ENCODE measurements at regions of chr5 and their contacts with region 1.

Region 1: DNA sequence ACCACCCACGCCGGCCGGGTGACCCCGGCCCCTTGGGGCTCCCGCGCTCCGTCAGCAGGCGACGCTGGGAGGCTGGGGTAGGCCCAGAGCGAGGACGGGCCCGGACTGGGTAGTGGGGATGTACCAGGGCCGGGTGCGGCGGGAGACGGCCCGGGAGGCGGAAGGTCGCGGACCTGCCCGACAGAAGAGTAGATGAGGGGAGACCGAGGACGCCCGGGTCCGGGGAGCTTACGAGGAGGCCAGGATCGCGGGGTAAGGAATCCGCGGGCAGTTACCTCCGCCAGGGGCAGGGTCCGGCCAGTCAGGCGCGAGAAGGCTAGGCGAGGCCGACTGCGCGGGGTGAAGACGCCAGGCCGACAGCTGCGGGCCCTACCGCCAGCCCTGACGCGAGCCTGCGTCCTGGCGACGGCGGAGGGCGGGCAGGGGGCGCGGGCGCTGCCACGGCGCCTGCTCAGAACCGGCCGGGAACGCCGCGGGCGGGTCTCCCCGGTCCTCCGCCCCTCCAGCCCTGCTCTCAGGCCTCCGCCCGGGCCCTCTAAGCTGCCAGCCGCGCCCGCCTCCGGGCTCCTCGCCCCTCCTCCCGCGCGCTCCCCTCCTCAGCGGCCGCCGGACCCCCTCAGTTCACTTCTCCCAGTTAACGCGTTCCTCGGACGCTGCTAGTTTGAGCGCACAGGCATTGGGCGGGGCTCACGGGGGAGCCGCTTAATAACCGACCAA is at the start of gene CPLANE1:
- H3K4me3 ChIP-seq: peak within 1 kb of the TSS; percentile 58
- H3K27ac ChIP-seq: peak within 1 kb of the TSS; percentile 99
- H3K4me1 ChIP-seq: peaks cover 14% of the 10 kb centered on the region
- CTCF ChIP-seq: peak; percentile 91

Region 2: GRCh38 chr5:37214550-37214949 is 34.6 kb before region 1 on chr5:
- CTCF ChIA-PET with region 1: no interaction called
- POLR2A ChIA-PET with region 1: no interaction called
- H3K4me3 ChIP-seq: no peak overlapping the region
- H3K27ac ChIP-seq: no peak overlapping the region
- H3K4me1 ChIP-seq: peaks cover 3% of the 10 kb centered on the region; the same call in 1 of the 2 replicates
- CTCF ChIP-seq: no peak

Region 3: DNA sequence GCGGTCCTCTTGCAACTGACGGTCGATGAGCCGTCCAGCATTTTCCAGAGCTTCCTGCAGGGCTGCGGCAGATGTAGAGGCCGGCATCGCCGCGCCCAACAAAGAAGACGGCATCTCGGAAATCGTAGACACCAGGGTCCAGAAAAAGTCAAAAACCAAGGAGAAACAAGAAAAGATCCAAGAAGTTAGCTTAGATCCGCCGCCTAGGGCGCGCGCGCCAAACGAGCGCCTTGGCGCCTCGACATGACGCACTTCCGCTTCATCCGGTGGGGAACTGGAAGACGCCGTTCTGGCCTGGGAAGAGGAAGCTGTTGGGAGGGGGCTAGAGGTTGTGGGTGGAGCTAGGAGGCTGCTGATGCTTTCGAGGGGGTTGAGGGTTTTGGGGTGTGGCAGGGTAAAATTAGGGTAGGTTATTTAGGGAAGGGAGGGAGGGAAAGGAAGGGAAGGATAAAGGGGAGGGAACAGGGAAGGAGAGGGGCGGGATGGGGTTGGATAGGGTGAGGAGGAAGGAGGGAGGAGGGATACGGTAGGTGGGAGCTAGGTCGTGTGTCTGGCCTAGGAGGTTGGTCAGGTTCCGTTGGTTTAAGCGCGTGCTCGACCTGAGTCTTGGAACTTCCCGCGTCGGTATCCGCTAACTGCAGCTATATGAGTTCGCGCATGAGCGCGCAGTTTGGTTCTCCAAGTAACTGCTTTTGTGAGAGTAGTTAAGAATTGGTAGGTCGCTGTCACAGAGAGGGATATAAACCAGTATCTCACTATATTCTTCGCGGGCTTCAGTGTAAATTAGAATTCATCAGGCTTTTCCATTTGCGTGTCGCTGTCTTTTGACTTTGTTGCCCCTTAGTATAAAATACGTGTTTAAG is 122.0 kb after region 1 on chr5 and contains the start of gene NUP155:
- CTCF ChIA-PET with region 1: interaction called, 5 read pairs
- POLR2A ChIA-PET with region 1: interaction called, 17 read pairs
- H3K4me3 ChIP-seq: peak within 1 kb of the TSS; percentile 97
- H3K27ac ChIP-seq: peak within 1 kb of the TSS; percentile 88
- H3K4me1 ChIP-seq: peaks cover 11% of the 10 kb centered on the region
- CTCF ChIP-seq: no peak

Region 4: GRCh38 chr5:37926732-37927131 is 677.6 kb after region 1 on chr5:
- CTCF ChIA-PET with region 1: no interaction called
- POLR2A ChIA-PET with region 1: no interaction called
- H3K4me3 ChIP-seq: no peak overlapping the region
- H3K27ac ChIP-seq: no peak overlapping the region
- H3K4me1 ChIP-seq: no peaks in the 10 kb centered on the region
- CTCF ChIP-seq: no peak

Measured in HEK293 (cell line).